ENCODE measurements at regions of chr4 and their contacts with region 1.

Region 1: DNA sequence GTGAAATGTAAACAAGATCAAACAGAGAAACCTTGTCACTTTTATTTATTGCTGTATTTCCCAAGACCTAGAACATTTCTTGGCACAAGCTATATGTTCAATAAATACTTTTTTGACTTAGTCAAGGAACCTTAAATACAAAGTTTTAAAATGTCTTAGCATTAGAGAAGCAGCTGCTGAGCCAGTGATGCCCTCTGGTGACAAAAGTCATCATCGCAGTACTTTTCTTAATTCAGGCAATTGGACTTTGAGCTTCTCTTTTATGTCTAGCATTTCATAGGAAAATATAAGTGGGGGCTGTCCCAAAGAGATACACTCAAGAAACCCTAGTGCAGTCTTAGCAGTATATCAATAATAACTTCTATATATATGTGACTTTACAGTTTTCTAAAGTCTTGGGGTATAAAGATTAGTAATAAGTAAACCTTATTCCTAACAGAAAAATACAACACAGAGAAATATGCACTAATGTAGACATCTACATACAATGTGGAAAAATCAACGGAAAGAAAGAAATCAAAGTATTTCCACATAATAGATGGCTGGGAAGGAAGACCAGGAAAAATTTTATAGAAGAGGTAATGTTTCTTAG is 118.4 kb downstream of the DTHD1 start:
- DNase-seq: peak; percentile 6
- H3K4me3 ChIP-seq: no peak overlapping the region
- H3K27ac ChIP-seq: no peak overlapping the region
- H3K4me1 ChIP-seq: peaks cover 5% of the 10 kb centered on the region
- H3K27me3 ChIP-seq: peaks cover 2% of the 10 kb centered on the region
- CTCF ChIP-seq: peak; percentile 61

Region 2: GRCh38 chr4:36351082-36351666 is 48.7 kb before region 1 on chr4:
- CTCF ChIA-PET with region 1: no interaction called
- POLR2A ChIA-PET with region 1: no interaction called
- intact Hi-C with region 1: loop called (anchors 2 kb)
- DNase-seq: peak; percentile 61
- H3K4me3 ChIP-seq: no peak overlapping the region
- H3K27ac ChIP-seq: no peak overlapping the region
- H3K4me1 ChIP-seq: no peaks in the 10 kb centered on the region
- H3K27me3 ChIP-seq: no peaks in the 10 kb centered on the region
- CTCF ChIP-seq: peak; percentile 74